ENCODE measurements at regions of chr7 and their contacts with region 1.

Region 1: GRCh38 chr7:154171422-154171821 is 119.2 kb downstream of the DPP6 start:
- DNase-seq: no peak
- H3K4me3 ChIP-seq: no peak overlapping the region
- H3K27ac ChIP-seq: no peak overlapping the region
- H3K4me1 ChIP-seq: no peaks in the 10 kb centered on the region
- H3K27me3 ChIP-seq: no peaks in the 10 kb centered on the region
- CTCF ChIP-seq: no peak

Region 2: GRCh38 chr7:154253810-154254209 is 82.4 kb after region 1 on chr7:
- CTCF ChIA-PET with region 1: no interaction called
- dilution Hi-C with region 1: loop called (anchors 5 kb)
- in situ Hi-C with region 1: no loop called
- intact Hi-C with region 1: no loop called
- DNase-seq: no peak
- H3K4me3 ChIP-seq: no peak overlapping the region
- H3K27ac ChIP-seq: no peak overlapping the region
- H3K4me1 ChIP-seq: no peaks in the 10 kb centered on the region
- H3K27me3 ChIP-seq: no peaks in the 10 kb centered on the region
- CTCF ChIP-seq: no peak